A549 (cell line): ENCODE measurements at regions of chr19 and their contacts with region 1.

Region 1: DNA sequence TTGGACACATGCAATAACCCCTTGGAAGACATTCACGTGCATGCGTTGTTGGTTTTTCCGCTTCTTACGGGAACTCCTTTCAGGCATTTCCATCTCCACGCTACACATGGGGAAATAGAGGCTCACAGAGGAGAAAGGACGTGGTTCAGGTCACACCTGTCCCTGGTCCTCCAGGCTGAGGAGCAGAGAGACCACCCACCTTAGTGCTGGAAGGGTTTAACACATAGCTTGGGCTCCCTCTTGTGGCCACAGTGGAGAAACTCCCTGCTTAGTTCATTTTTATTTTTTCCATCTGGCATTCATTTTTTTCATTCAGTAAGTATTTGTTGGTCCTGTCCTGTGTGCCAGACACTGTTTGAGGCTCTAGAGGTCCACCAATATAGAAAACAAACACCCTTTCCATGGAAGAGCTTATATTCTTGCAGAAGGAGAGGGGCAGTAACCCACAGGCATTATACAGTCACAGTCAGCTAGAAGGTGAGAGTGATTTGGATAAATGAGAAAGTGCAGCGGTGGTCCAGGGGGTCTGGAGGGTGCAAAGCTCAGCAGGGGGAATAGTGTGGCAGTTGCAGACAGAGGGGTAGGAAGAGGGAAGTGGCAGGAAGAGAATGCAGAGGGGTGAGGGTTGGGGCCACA is 24.2 kb upstream of the TTYH1 start:
- DNase-seq: peak in 1 of 2 experiments; percentile 80
- ATAC-seq: peak; percentile 49 to 69; a peak in 4 of 6 replicates
- H3K4me3 ChIP-seq: no peak overlapping the region
- H3K27ac ChIP-seq: no peak overlapping the region
- H3K4me1 ChIP-seq: 0 out of 3 replicates have a peak, but pooled peaks cover 5% of the 10 kb centered on the region
- CTCF ChIP-seq: peak; percentile 88
- EP300 ChIP-seq: no peak
- POLR2A ChIP-seq: no peak
- RAD21 ChIP-seq: peak; percentile 80 to 83

Region 2: DNA sequence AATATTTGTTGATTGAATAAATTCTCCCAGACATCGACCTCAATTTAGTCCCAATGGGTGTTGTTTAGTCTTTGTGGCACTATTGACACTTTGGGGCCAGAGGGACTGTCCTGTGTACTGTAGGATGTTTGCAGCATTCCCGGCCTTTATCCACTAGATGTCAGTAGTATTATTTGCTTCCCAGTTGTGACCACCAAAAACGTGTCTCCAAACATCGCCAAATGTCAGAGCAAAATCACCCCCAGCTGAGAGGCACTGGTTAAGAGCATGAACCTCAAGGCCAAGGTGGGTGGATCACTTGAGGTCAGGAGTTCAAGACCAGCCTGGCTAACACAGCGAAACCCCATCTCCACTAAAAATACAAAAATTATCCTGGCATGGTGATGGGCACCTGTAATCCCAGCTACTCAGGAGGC is 582.3 kb before region 1 on chr19:
- CTCF ChIA-PET with region 1: interaction called, 13 read pairs
- POLR2A ChIA-PET with region 1: no interaction called
- DNase-seq: peak; percentile 52 to 85
- ATAC-seq: peak; percentile 87 to 91
- H3K4me3 ChIP-seq: no peak overlapping the region
- H3K27ac ChIP-seq: no peak overlapping the region
- H3K4me1 ChIP-seq: no peaks in the 10 kb centered on the region
- CTCF ChIP-seq: peak; percentile 86
- EP300 ChIP-seq: no peak
- POLR2A ChIP-seq: no peak
- RAD21 ChIP-seq: peak; percentile 88 to 98

Region 3: DNA sequence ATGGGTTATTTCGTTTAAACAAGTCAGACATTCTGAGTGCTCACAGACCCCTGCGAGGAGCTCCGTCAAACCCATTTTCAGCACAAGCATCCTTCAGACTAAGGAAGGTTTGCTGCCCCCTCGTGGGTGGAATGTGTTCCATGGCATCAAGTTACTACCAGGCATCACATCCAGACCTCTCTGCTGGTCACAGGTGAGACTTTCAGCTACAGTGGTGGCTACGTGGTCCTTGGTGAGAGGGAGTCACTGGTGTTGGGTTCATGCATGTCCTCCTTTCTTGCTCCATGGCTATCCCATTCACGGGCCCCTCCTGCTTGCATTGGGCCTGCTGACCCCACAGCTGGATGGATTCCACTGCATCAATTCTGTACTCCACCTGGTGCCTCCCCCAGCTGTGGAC is 124.9 kb before region 1 on chr19:
- CTCF ChIA-PET with region 1: interaction called, 20 read pairs
- POLR2A ChIA-PET with region 1: no interaction called
- DNase-seq: peak; percentile 54 to 79
- ATAC-seq: peak; percentile 94 to 95
- H3K4me3 ChIP-seq: no peak overlapping the region
- H3K27ac ChIP-seq: no peak overlapping the region
- H3K4me1 ChIP-seq: no peaks in the 10 kb centered on the region
- CTCF ChIP-seq: peak; percentile 79
- EP300 ChIP-seq: no peak
- POLR2A ChIP-seq: no peak
- RAD21 ChIP-seq: peak; percentile 31 to 52; a peak in 3 of 5 replicates

Region 4: GRCh38 chr19:54325194-54325621 is 65.9 kb before region 1 on chr19:
- CTCF ChIA-PET with region 1: interaction called, 17 read pairs
- POLR2A ChIA-PET with region 1: no interaction called
- DNase-seq: peak; percentile 55 to 60
- ATAC-seq: peak; percentile 67 to 81; a peak in 4 of 6 replicates
- H3K4me3 ChIP-seq: no peak overlapping the region
- H3K27ac ChIP-seq: no peak overlapping the region
- H3K4me1 ChIP-seq: no peaks in the 10 kb centered on the region
- CTCF ChIP-seq: peak; percentile 77
- EP300 ChIP-seq: no peak
- POLR2A ChIP-seq: no peak
- RAD21 ChIP-seq: peak; percentile 28 to 43; a peak in 4 of 5 replicates

Region 5: DNA sequence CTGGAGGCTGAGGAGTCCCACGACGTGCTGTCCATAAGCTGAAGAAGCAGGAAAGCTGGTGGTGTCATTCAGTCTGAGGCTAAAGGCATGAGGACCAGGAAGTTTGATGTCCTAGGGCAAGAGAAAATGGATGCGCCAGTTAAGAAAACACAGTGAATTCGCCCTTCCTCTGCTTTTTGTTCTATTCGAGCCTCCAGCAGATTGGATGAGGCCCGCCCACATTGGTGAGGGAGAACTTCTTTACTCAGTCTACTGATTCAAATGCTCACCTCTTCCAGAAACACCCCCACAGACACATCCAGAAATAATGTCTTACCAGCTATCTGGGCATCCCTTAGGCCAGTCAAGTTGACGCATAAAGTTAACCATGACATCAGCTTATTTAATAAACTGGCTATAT is 16.7 kb after region 1 on chr19:
- CTCF ChIA-PET with region 1: interaction called, 70 read pairs
- POLR2A ChIA-PET with region 1: no interaction called
- DNase-seq: no peak
- ATAC-seq: no peak
- H3K4me3 ChIP-seq: no peak overlapping the region
- H3K27ac ChIP-seq: no peak overlapping the region
- H3K4me1 ChIP-seq: no peaks in the 10 kb centered on the region
- CTCF ChIP-seq: no peak
- EP300 ChIP-seq: no peak
- POLR2A ChIP-seq: no peak
- RAD21 ChIP-seq: no peak

Region 6: DNA sequence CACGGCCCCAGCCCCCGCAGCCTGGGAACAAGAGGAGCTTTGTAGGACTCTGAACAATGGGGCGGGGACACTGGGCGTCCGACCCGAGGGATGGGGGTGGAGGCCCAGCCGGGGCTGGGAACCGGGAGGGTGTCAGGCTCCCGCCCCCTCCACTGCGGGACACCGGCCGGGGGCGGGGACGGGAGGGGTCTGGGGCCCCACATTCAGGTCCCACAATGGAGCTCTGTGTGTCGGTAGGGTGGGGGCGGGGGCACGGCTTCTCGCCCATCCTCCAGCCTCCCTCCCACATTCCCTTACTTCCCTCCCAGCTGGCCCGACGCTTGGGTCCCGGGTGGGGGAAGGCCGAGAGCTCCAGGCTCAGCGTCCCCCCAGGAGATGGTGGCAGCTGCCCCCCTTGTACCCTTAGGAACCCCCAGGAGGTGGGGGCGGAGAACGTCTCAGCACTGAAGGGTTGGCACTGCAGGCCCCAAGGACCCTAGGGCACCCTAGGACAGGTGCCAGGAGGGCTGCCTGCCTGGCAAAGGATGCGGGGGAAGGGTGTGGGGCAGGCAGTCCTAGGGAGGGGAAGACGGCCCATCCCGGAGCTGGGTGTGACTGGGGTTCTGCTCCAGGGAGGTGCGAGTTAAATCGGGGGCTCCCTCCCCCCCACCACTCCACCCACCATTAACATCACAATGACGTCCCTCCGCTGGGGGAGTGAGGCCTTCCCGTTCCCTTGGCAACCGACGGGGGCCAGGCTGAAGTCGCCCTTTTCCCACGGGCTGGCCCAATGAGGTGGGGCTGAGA is 29.5 kb after region 1 on chr19:
- CTCF ChIA-PET with region 1: interaction called, 23 read pairs
- POLR2A ChIA-PET with region 1: no interaction called
- DNase-seq: peak in 1 of 2 experiments; percentile 63
- ATAC-seq: peak in 1 of 2 experiments; percentile 37; a peak in 3 of 6 replicates
- H3K4me3 ChIP-seq: no peak overlapping the region
- H3K27ac ChIP-seq: peak overlapping the region; percentile 11 to 72; a peak in 4 of 6 replicates
- H3K4me1 ChIP-seq: peaks cover 19% of the 10 kb centered on the region; the same call in 2 of the 3 replicates
- CTCF ChIP-seq: no peak
- EP300 ChIP-seq: no peak
- POLR2A ChIP-seq: no peak
- RAD21 ChIP-seq: no peak